ENCODE measurements at regions of chr6 and their contacts with region 1.

Region 1: DNA sequence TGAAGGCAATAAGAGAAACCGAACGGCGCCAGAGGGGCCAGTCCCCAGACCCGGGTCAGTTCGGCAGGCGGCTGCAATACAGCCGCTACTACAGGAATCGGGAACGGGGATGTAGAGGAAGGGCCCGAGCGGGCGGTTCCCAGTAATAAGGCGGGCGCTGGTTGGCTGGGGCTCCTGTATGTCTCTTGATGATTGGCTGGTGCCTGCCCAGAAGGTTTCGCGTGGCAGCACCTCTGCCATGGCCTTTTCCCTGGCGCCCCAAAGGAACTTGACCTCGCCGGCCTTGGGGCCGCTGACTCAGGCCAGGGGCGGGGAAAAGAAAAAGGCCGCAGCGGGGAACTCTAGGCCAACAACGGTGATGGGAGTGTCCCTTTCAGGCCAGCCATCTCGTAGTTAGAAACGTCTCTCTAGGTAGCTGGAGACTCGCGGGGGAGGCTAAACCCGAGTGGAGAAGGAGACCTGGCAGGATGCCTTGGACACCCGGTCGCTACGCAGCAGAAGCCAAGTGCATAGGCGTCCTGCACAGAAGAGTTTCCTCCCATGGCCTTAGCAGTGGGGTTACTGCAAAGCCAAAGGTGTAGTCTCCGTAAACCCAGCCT is at the start of gene IBTK:
- DNase-seq: peak; percentile 73
- H3K4me3 ChIP-seq: peak within 1 kb of the TSS; percentile 78
- H3K27ac ChIP-seq: peak within 1 kb of the TSS; percentile 94
- H3K27me3 ChIP-seq: no peaks in the 10 kb centered on the region
- CTCF ChIP-seq: no peak
- polyA plus RNA-seq, gene IBTK: 26.5 and 39.8 TPM in 2 replicates

Region 2: DNA sequence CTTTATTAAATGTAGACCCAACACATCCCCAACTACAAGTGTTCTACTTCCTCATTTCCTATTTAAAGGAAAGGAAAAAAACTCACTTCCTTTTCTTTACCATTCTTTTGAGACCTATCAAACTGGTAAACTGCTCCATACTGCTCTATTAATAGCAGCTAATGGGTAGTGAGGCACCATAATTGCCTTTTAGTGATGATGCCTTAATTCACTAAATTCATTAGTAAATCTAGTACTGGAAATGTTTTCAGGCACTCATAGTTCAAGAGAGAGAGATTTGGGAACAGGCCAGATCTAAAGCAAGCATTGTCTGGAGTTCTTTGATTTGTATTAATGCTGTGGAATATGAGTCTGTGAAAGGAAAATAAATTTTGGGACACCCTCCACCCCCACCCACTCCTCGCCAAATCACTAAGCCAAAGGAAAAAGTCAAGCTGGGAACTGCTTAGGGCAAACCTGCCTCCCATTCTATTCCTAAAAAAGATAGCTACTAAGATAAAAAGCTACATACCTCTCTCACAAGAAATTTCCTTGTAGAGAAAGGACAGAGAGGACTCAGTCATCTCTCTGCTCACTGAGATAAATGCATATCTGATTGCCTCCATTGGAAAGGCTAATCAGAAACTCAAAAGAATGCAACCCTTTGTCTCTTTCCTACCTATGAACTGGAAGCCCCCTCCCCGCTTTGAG is 13.4 kb after region 1 on chr6:
- CTCF ChIA-PET with region 1: interaction called, 16 read pairs
- POLR2A ChIA-PET with region 1: no interaction called
- DNase-seq: no peak
- H3K4me3 ChIP-seq: no peak overlapping the region
- H3K27ac ChIP-seq: no peak overlapping the region
- H3K27me3 ChIP-seq: no peaks in the 10 kb centered on the region
- CTCF ChIP-seq: no peak

Region 3: GRCh38 chr6:82616386-82617028 is 368.8 kb after region 1 on chr6:
- CTCF ChIA-PET with region 1: interaction called, 12 read pairs
- POLR2A ChIA-PET with region 1: no interaction called
- DNase-seq: no peak
- H3K4me3 ChIP-seq: no peak overlapping the region
- H3K27ac ChIP-seq: no peak overlapping the region
- H3K27me3 ChIP-seq: no peaks in the 10 kb centered on the region
- CTCF ChIP-seq: peak; percentile 15; the same call in 1 of the 2 replicates

Region 4: GRCh38 chr6:83057705-83058321 is 810.1 kb after region 1 on chr6:
- CTCF ChIA-PET with region 1: interaction called, 95 read pairs
- POLR2A ChIA-PET with region 1: no interaction called
- DNase-seq: no peak
- H3K4me3 ChIP-seq: no peak overlapping the region
- H3K27ac ChIP-seq: no peak overlapping the region
- H3K27me3 ChIP-seq: no peaks in the 10 kb centered on the region
- CTCF ChIP-seq: peak; percentile 91